MCF 10A (cell line): ENCODE measurements at regions of chr6 and their contacts with region 1.

Region 1: DNA sequence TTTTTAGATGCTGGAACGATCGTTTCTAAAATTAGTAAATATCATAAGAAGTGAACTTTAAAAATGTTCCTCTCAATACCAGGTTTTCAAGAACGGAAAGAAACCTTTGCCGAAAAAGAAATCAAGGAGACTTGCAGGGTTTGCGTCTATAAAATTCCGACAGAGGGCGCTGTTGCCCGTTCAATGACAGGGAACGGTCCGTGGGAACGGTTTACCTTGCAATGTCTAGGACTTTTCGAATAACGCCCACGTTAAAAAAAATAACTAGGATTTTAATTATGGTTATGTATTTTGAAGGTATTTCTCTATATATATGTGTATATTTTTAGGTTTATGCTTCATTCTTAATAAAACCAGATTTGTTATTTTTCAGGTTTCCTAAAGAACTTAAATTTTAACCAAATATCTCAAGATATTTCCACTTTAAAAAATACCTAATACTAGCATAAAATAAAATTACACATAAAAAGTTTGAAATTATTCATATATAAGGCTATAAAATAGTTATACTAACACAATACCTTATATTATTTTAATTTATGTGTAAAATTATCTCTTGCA is 2.5 kb upstream of the TFAP2B start:
- DNase-seq: peak; percentile 83
- H3K4me3 Mint-ChIP-seq: peak overlapping the region; percentile 87
- H3K27ac Mint-ChIP-seq: peak overlapping the region; percentile 55
- H3K4me1 Mint-ChIP-seq: peaks cover 15% of the 10 kb centered on the region
- H3K27me3 Mint-ChIP-seq: peaks cover 66% of the 10 kb centered on the region
- CTCF ChIP-seq: peak; percentile 80

Region 2: DNA sequence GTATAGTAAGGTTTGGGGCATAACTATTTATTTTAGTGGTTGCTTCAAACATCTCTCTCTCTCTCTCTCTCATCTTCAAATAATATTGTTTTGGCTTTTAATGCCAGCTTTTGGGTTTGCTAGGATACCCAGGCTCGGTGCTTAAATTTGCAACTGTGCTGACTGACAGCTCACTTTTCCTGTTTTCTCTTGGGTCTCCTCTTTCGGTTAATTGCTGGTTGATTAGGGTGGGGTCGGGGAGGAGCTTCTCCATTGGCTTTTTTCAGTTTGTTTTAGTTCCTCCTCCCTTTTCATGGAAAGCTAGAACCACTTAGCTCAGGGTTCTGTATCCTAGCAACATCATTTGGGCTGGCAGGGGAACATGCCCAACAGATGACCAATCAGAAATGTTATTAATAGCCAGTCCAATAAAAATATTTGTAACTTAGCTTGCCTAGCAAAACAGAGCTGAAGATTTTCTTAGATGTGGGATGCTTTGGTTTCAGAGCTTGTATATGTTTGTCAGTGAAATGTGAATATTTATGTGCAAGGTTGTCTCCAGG is 13.8 kb after region 1 on chr6:
- CTCF ChIA-PET with region 1: interaction called, 11 read pairs
- POLR2A ChIA-PET with region 1: no interaction called
- intact Hi-C with region 1: no loop called
- DNase-seq: no peak
- H3K4me3 Mint-ChIP-seq: no peak overlapping the region
- H3K27ac Mint-ChIP-seq: no peak overlapping the region
- H3K4me1 Mint-ChIP-seq: no peaks in the 10 kb centered on the region
- H3K27me3 Mint-ChIP-seq: peaks cover 40% of the 10 kb centered on the region
- CTCF ChIP-seq: no peak

Region 3: GRCh38 chr6:51513891-51514747 is 697.9 kb after region 1 on chr6:
- CTCF ChIA-PET with region 1: interaction called, 11 read pairs
- POLR2A ChIA-PET with region 1: no interaction called
- intact Hi-C with region 1: loop called (anchors 1 kb)
- DNase-seq: peak; percentile 77
- H3K4me3 Mint-ChIP-seq: peak overlapping the region; percentile 58
- H3K27ac Mint-ChIP-seq: peak overlapping the region; percentile 83
- H3K4me1 Mint-ChIP-seq: peaks cover 16% of the 10 kb centered on the region
- H3K27me3 Mint-ChIP-seq: no peaks in the 10 kb centered on the region
- CTCF ChIP-seq: no peak

Region 4: GRCh38 chr6:51844336-51844735 is 1028.1 kb after region 1 on chr6:
- CTCF ChIA-PET with region 1: interaction called, 3 read pairs
- POLR2A ChIA-PET with region 1: no interaction called
- intact Hi-C with region 1: loop called (anchors 5 kb)
- DNase-seq: peak; percentile 23
- H3K4me3 Mint-ChIP-seq: no peak overlapping the region
- H3K27ac Mint-ChIP-seq: no peak overlapping the region
- H3K4me1 Mint-ChIP-seq: no peaks in the 10 kb centered on the region
- H3K27me3 Mint-ChIP-seq: no peaks in the 10 kb centered on the region
- CTCF ChIP-seq: peak; percentile 21

Region 5: DNA sequence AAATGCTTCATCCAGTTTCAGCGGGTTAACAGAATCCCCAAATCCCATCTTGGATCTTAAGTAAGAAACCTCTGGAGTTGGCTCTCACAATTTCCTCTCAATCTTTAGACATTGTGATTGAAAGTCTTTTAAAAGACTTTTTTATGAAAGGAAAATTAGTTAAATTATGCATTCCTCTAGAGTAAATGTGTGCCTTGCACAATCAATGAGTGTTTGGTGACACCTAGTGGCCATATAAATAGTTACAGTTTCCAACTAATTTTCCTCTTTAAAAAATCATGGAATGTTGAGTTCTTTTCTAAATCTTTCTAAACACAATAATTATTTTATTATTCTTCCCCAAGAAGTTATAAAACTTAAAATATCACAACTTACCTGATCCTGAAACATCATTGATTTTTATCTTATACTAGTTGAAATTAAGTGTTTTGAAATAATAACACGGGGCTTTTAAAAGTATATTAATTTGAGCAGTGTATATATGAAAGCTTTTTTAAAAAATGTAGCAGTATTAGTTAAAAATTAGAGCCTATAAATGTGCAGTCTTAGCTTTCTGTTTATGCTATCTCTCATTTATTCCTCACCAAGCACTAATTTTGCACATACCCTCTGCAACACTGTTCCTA is 1204.9 kb after region 1 on chr6:
- CTCF ChIA-PET with region 1: interaction called, 3 read pairs
- POLR2A ChIA-PET with region 1: no interaction called
- intact Hi-C with region 1: loop called (anchors 1 kb)
- DNase-seq: peak; percentile 45
- H3K4me3 Mint-ChIP-seq: no peak overlapping the region
- H3K27ac Mint-ChIP-seq: no peak overlapping the region
- H3K4me1 Mint-ChIP-seq: no peaks in the 10 kb centered on the region
- H3K27me3 Mint-ChIP-seq: peaks cover 20% of the 10 kb centered on the region
- CTCF ChIP-seq: peak; percentile 53